GM23248 (cell line): ENCODE measurements at regions of chr9 and their contacts with region 1.

Region 1: GRCh38 chr9:28396058-28396457 is 822.8 kb upstream of the C9orf72 start:
- DNase-seq: no peak
- H3K4me3 ChIP-seq: no peak overlapping the region
- H3K27ac ChIP-seq: no peak overlapping the region
- H3K4me1 ChIP-seq: no peaks in the 10 kb centered on the region
- H3K27me3 ChIP-seq: no peaks in the 10 kb centered on the region

Region 2: GRCh38 chr9:28332648-28333047 is 63.4 kb before region 1 on chr9:
- in situ Hi-C with region 1: loop called (anchors 10 kb)
- DNase-seq: no peak
- H3K4me3 ChIP-seq: no peak overlapping the region
- H3K27ac ChIP-seq: no peak overlapping the region
- H3K4me1 ChIP-seq: no peaks in the 10 kb centered on the region
- H3K27me3 ChIP-seq: no peaks in the 10 kb centered on the region